ENCODE measurements at regions of chr3 and their contacts with region 1.

Region 1: DNA sequence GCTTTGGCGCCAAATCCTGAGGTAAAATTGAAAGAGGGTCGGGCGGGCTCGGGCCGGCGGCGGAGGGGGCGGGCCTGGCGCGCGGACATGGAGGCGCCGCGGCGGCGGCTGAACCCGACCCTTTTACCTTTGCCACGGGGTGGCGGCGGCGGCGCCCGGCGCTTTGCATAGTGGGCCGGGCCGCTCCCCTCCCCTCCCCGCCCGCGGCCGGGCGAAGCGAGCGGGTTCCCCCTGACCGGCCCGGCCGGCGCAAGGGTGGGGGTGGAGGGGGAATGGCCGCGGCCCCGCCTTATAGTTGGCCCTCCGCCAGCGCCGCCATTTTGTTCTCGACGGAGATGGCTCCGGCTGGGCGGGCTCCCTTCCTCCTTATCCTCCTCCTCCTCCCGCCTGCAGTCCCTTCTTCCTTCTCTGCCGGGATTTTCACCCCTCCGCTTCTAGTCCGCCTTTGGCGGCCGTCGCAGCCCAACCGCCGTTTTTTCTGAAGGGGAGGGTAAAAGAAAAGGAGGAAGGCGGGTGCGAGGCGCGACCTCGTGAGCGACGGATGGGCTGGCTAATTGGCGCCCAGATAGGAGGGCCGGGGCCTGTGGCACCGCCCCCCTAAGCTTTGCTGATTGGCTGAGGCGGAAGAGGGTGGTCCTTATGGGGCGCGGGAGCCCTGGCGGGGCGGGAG is 638 bp downstream of the NR2C2 start:
- DNase-seq: peak; percentile 93 to 98 (median 96)
- ATAC-seq: peak; percentile 94
- H3K4me3 ChIP-seq: peak overlapping the region; percentile 93
- H3K4me3 Mint-ChIP-seq: peak overlapping the region; percentile 97 to 100 (median 98)
- H3K27ac ChIP-seq: peak overlapping the region; percentile 99
- H3K27ac Mint-ChIP-seq: peak overlapping the region; percentile 98 to 100 (median 100)
- H3K4me1 ChIP-seq: peaks cover 19 to 22% of the 10 kb centered on the region in 2 donors
- H3K4me1 Mint-ChIP-seq: peaks cover 31 to 74% (median 60%) of the 10 kb centered on the region in 7 donors
- H3K27me3 ChIP-seq: no peaks in the 10 kb centered on the region
- H3K27me3 Mint-ChIP-seq: peaks cover 0 to 2% (median 0%) of the 10 kb centered on the region in 5 donors

Region 2: GRCh38 chr3:12967606-12968351 is 1980.2 kb before region 1 on chr3:
- CTCF ChIA-PET with region 1: no interaction called
- POLR2A ChIA-PET with region 1: no interaction called
- intact Hi-C with region 1: loop called in 1 of 2 experiments (anchors 10 kb)
- DNase-seq: peak; percentile 71 to 87 (median 83)
- ATAC-seq: peak; percentile 99
- H3K4me3 ChIP-seq: peak overlapping the region; percentile 47
- H3K4me3 Mint-ChIP-seq: peak overlapping the region; percentile 74 to 87 (median 86)
- H3K27ac ChIP-seq: peak overlapping the region; percentile 29
- H3K27ac Mint-ChIP-seq: peak overlapping the region in 4 of 9 donors; percentile 9 to 84 (median 60)
- H3K4me1 ChIP-seq: peaks cover 47 to 53% of the 10 kb centered on the region in 2 donors
- H3K4me1 Mint-ChIP-seq: peaks cover 50 to 86% (median 77%) of the 10 kb centered on the region in 7 donors
- H3K27me3 ChIP-seq: no peaks in the 10 kb centered on the region
- H3K27me3 Mint-ChIP-seq: peaks cover 0 to 5% (median 0%) of the 10 kb centered on the region in 5 donors

Region 3: GRCh38 chr3:14178247-14179113 is 769.5 kb before region 1 on chr3 and contains the starts of genes LSM3 and XPC:
- CTCF ChIA-PET with region 1: no interaction called
- POLR2A ChIA-PET with region 1: interaction called, 3 read pairs
- intact Hi-C with region 1: loop called (anchors 1 kb)
- DNase-seq: peak; percentile 98 to 100 (median 99)
- ATAC-seq: peak; percentile 98
- H3K4me3 ChIP-seq: peak within 1 kb of the TSS; percentile 68
- H3K4me3 Mint-ChIP-seq: peak within 1 kb of the TSS; percentile 94 to 100 (median 98)
- H3K27ac ChIP-seq: peak within 1 kb of the TSS; percentile 99
- H3K27ac Mint-ChIP-seq: peak within 1 kb of the TSS; percentile 96 to 100 (median 99)
- H3K4me1 ChIP-seq: peaks cover 37 to 48% of the 10 kb centered on the region in 2 donors
- H3K4me1 Mint-ChIP-seq: peaks cover 45 to 85% (median 82%) of the 10 kb centered on the region in 7 donors
- H3K27me3 ChIP-seq: no peaks in the 10 kb centered on the region
- H3K27me3 Mint-ChIP-seq: peaks cover 0 to 2% (median 0%) of the 10 kb centered on the region in 5 donors
- total RNA-seq, gene LSM3: 6.0 to 14.1 (median 8.0) TPM
- total RNA-seq, gene XPC: 56.3 to 94.8 (median 78.1) TPM

Region 4: DNA sequence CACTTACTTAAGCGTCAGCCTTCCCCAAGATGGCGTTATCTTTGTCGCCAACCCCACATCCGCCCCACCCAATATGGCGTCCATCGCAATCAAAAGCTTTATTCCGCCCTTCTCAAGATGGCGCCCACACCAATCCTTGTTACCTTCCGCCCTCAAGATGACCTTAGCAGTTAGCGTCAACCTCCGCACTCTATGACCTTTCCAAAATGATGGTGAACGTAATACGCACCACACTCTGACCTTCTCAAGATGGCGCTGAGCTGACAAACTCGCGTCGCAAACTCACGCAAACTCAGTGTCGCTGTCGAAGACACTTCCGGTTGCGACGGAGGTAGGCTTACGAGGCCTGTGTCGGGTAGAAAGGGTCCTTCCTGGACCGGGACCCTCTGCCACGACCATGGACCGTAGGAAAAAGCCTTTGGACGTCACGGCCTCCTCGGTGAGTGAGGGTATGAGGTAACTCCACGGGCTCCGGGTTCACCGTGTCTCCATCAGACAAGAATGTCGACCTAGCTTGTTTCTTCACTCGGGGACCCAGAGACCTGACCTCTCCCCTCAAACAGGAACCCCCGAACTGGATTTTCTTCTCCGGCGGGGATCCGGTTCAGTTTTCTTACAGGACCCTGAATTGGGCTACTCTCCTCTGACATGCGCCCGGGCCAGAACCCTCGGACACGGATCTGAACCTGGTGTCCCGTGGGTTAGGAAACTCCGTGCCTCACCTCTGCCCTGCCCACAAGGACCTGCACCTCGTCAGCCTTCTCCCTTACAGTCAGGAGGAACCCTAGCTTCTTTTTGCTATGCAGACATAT is 296.4 kb before region 1 on chr3 and contains the start of gene CCDC174:
- CTCF ChIA-PET with region 1: no interaction called
- POLR2A ChIA-PET with region 1: interaction called, 15 read pairs
- intact Hi-C with region 1: loop called (anchors 1 kb)
- DNase-seq: peak; percentile 84 to 98 (median 96)
- ATAC-seq: peak; percentile 99
- H3K4me3 ChIP-seq: peak within 1 kb of the TSS; percentile 90
- H3K4me3 Mint-ChIP-seq: peak within 1 kb of the TSS; percentile 84 to 100 (median 96)
- H3K27ac ChIP-seq: peak within 1 kb of the TSS; percentile 94
- H3K27ac Mint-ChIP-seq: peak within 1 kb of the TSS; percentile 92 to 100 (median 98)
- H3K4me1 ChIP-seq: peaks cover 21 to 25% of the 10 kb centered on the region in 2 donors
- H3K4me1 Mint-ChIP-seq: peaks cover 25 to 80% (median 66%) of the 10 kb centered on the region in 7 donors
- H3K27me3 ChIP-seq: no peaks in the 10 kb centered on the region
- H3K27me3 Mint-ChIP-seq: peaks cover 0 to 2% (median 0%) of the 10 kb centered on the region in 5 donors
- total RNA-seq, gene CCDC174: 21.6 to 59.2 (median 46.2) TPM

Region 5: DNA sequence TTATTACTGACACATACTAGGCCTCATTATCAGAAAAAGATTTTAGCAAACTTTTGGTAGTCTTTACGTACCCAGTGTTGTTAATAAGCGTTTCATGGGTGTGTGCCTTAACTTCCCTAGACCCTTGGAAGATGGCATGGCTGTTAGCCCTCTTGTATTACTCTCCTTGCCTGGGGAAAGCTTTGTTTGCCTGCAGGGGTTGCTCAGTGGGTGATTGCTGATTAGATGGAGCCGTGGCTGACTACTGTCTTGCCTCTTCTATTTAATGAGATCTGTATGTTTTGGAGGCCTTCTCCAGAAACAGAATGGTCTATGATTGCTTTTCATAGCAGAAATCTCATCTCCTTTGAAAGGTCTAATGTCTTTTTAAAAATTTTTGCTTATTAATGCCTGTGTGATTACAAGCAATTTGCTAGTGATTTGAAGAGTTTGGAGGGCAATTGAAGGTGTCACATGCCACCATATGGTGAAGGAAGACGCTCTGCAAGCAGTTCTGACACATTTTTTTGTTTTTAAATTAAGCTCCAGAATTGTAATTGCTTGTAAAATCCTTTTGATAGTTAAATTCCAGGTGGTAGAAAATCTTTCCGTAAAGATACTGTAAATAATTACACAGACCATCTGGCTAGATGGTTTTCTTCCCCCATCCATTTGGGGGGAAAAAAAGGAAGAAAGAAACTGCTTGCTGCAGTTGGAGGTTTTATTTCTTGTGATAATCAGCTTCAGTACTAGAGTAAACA is 284.5 kb before region 1 on chr3:
- CTCF ChIA-PET with region 1: no interaction called
- POLR2A ChIA-PET with region 1: no interaction called
- intact Hi-C with region 1: no loop called
- DNase-seq: no peak
- ATAC-seq: no peak
- H3K4me3 ChIP-seq: no peak overlapping the region
- H3K4me3 Mint-ChIP-seq: no peak overlapping the region
- H3K27ac ChIP-seq: no peak overlapping the region
- H3K27ac Mint-ChIP-seq: peak overlapping the region in 2 of 9 donors; percentile 43 to 48
- H3K4me1 ChIP-seq: no peaks in the 10 kb centered on the region
- H3K4me1 Mint-ChIP-seq: peaks cover 0 to 12% (median 5%) of the 10 kb centered on the region in 7 donors
- H3K27me3 ChIP-seq: no peaks in the 10 kb centered on the region
- H3K27me3 Mint-ChIP-seq: no peaks in the 10 kb centered on the region

Region 6: GRCh38 chr3:14988988-14989394 is 41.0 kb after region 1 on chr3:
- CTCF ChIA-PET with region 1: no interaction called
- POLR2A ChIA-PET with region 1: no interaction called
- intact Hi-C with region 1: no loop called
- DNase-seq: peak in 3 of 9 donors; percentile 2 to 11 (median 7)
- ATAC-seq: peak; percentile 78
- H3K4me3 ChIP-seq: no peak overlapping the region
- H3K4me3 Mint-ChIP-seq: no peak overlapping the region
- H3K27ac ChIP-seq: no peak overlapping the region
- H3K27ac Mint-ChIP-seq: peak overlapping the region in 5 of 9 donors; percentile 8 to 73 (median 38)
- H3K4me1 ChIP-seq: peaks cover 3 to 10% of the 10 kb centered on the region in 2 donors
- H3K4me1 Mint-ChIP-seq: peaks cover 26 to 86% (median 74%) of the 10 kb centered on the region in 7 donors
- H3K27me3 ChIP-seq: no peaks in the 10 kb centered on the region
- H3K27me3 Mint-ChIP-seq: no peaks in the 10 kb centered on the region

Region 7: DNA sequence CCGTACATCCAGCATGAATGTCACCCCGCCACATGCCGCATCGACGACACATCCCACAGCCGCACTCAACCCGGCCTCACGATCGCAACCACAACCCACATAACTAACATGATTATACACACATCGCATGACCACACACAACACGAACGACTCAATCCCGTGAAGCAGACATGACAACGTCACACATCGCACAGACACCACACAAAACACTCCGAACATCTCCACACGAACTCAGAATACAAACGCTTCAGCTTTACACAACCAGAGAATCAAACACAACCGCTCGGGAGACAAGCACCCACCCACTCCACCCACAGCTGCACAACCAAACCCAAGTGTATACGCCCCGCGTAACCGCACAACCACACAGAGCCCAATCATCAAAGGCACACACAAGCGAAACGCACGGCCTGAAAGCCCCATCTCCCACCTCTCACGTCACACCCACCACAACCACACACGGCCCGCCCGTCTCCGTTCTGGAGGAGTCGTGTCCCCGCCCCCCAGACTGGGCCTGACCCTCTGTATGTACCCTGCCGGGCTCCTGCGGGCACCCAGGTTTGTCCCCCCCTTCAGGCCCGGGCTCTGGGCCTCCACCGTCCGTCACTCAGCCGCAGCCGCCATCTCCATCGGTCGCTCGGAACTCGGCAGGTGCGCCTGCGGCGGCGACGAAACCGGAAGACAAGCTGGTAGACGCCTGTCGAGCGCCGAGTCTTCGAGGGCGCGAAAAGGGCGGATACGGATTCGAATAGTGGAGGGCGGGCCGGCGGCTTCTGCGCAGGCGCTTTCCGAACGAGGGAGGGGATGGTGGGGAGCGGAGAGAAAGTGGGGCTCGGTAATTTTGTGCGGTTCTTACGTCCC is 150.7 kb after region 1 on chr3 and contains the start of gene RBSN:
- CTCF ChIA-PET with region 1: no interaction called
- POLR2A ChIA-PET with region 1: interaction called, 8 read pairs
- intact Hi-C with region 1: loop called (anchors 1 kb)
- DNase-seq: peak; percentile 87 to 96 (median 94)
- ATAC-seq: peak; percentile 87
- H3K4me3 ChIP-seq: peak within 1 kb of the TSS; percentile 83
- H3K4me3 Mint-ChIP-seq: peak within 1 kb of the TSS; percentile 90 to 99 (median 96)
- H3K27ac ChIP-seq: peak within 1 kb of the TSS; percentile 96
- H3K27ac Mint-ChIP-seq: peak within 1 kb of the TSS; percentile 90 to 99 (median 98)
- H3K4me1 ChIP-seq: peaks cover 8 to 14% of the 10 kb centered on the region in 2 donors
- H3K4me1 Mint-ChIP-seq: peaks cover 21 to 42% (median 30%) of the 10 kb centered on the region in 7 donors
- H3K27me3 ChIP-seq: no peaks in the 10 kb centered on the region
- H3K27me3 Mint-ChIP-seq: peaks cover 0 to 9% (median 2%) of the 10 kb centered on the region in 5 donors
- total RNA-seq, gene RBSN: 20.5 to 54.4 (median 39.6) TPM

Region 8: GRCh38 chr3:15859507-15860013 is 911.5 kb after region 1 on chr3:
- CTCF ChIA-PET with region 1: no interaction called
- POLR2A ChIA-PET with region 1: no interaction called
- intact Hi-C with region 1: loop called (anchors 2 to 5 kb)
- DNase-seq: peak; percentile 57 to 86 (median 71)
- ATAC-seq: peak; percentile 91
- H3K4me3 ChIP-seq: peak overlapping the region; percentile 63
- H3K4me3 Mint-ChIP-seq: peak overlapping the region; percentile 85 to 99 (median 95)
- H3K27ac ChIP-seq: peak overlapping the region; percentile 77
- H3K27ac Mint-ChIP-seq: peak overlapping the region in 6 of 9 donors; percentile 76 to 98 (median 92)
- H3K4me1 ChIP-seq: peaks cover 12 to 14% of the 10 kb centered on the region in 2 donors
- H3K4me1 Mint-ChIP-seq: peaks cover 21 to 50% (median 43%) of the 10 kb centered on the region in 7 donors
- H3K27me3 ChIP-seq: no peaks in the 10 kb centered on the region
- H3K27me3 Mint-ChIP-seq: peaks cover 0 to 10% (median 0%) of the 10 kb centered on the region in 5 donors